A549 (cell line): ENCODE measurements at regions of chr15 and their contacts with region 1.

Region 1: GRCh38 chr15:84934941-84935729 is 46.5 kb upstream of the PDE8A start:
- DNase-seq: peak in 1 of 2 experiments; percentile 51
- ATAC-seq: peak; percentile 66 to 83
- H3K4me3 ChIP-seq: no peak overlapping the region
- H3K27ac ChIP-seq: peak overlapping the region in 1 of 2 experiments; percentile 43; a peak in 2 of 6 replicates
- H3K4me1 ChIP-seq: peaks cover 9% of the 10 kb centered on the region
- CTCF ChIP-seq: peak; percentile 50
- EP300 ChIP-seq: no peak
- POLR2A ChIP-seq: no peak
- RAD21 ChIP-seq: peak; percentile 64 to 80

Region 2: DNA sequence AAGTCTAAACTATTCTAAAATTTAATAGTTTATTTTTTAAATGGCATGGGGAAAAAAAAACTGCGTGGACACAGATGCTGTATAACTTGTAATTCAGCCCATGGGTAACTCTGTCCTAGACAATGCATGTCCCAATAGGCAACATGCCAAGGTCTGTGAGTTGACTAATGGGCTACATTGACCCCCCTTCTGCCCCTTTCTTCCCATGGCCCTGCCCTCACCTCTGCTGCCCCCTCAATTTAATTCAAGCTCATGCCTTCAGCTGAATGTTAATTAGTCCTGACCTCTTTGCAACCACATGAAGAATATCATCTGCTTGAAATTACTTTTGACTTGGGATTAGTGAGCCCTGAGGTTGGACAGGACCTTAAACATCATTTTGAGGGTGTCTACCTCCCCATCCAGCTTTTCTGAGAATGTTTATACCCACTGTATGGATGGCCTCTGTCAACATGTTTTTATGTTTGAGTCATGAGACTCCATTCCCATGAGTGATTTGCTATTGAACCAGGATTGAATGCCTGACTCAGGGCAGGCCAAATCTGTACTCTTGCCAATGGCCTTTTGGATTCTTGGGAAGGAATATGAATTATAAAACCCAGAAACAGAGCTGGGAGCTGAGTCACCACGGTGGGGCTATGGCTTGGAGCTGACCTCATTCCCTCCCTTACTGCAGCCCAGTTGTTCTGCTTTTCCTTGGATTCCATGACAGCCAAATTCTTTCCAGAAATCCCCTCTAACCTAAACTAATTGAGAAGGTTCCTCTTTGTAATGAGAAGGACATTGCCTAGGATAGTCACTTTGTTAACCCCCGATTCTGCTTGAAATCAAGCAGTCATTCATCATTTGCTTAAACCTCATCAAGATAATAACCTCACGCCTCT is 13.1 kb after region 1 on chr15:
- CTCF ChIA-PET with region 1: interaction called, 11 read pairs
- POLR2A ChIA-PET with region 1: no interaction called
- DNase-seq: peak in 1 of 2 experiments; percentile 43
- ATAC-seq: peak; percentile 36 to 74; a peak in 4 of 6 replicates
- H3K4me3 ChIP-seq: no peak overlapping the region
- H3K27ac ChIP-seq: peak overlapping the region in 1 of 2 experiments; percentile 55; a peak in 3 of 6 replicates
- H3K4me1 ChIP-seq: peaks cover 15% of the 10 kb centered on the region; the same call in 2 of the 3 replicates
- CTCF ChIP-seq: no peak
- EP300 ChIP-seq: no peak
- POLR2A ChIP-seq: no peak
- RAD21 ChIP-seq: no peak